ENCODE measurements at regions of chr5 and their contacts with region 1.

Region 1: DNA sequence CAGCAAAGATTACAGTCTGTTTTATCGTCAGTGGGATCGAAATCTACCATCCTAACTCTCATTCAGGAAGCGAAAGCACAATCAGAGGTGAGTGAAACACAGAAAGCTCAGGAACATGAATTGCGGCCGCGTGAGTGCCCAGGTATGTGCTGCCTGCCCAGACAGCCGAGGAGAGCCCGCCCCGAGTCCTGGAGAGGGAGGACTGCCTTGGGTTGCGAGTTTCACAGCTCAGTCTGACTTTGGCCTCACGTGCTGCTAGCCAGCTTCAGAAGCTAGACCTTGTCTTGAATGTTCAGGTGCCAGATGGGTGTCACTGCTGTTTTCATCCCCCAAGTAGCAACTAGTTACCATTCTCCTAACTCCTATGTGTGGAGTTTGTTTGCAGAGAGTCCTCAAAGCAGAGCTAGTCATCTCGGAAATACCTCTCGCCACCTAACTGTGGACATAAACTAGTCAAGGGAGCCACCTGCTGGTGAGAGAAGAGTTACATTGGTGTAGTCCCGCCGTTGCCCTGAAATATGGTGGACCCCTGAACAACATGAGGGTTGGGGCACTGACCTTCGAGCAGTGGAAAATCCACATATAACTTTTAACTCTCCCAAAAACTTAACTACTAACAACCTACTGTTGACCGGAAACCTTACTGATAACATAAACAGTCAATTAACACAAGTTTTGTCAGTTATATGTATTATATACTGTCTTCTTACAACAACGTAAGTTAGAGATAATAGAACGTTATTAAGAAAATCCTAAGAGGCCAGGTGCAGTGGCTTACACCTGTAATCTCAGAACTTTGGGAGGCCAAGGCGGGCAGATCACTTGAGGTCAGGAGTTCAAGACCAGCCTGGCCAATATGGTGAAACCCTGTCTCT is 80.9 kb downstream of the GOLPH3 start:
- DNase-seq: peak in 38 of 42 donors; percentile 37 to 91 (median 72)

Region 2: DNA sequence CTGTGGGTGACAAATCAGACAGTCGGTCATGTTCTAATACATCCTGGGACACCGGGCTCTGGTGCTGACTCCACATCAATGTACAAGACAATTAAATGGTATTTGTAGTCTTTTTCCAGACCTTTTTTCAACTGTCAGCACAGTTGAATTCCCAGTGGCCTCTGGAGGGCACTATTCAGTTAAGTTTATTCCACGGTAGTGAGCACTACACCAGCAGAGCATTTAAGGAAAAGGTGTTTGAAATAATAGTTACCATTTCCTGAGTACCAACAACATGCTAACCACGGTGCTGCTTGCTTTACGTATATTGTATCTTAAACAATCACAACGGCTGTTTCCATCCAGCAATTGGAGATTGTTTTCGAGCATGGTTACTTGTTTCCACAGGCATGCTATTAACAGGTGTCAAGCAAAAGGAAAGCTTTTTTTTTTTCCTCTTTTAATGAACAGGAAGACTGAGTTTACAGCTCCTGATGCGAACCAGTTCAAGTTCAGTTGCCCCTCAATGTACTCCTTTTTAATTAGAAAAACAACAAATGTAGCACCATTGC is 267.6 kb before region 1 on chr5:
- intact Hi-C with region 1: loop called (anchors 5 kb)
- DNase-seq: peak in 38 of 42 donors; percentile 30 to 87 (median 66)

Measured in head of caudate nucleus (tissue), 42 donors.